Mammary epithelial cell (primary cell): ENCODE measurements at regions of chr19 and their contacts with region 1.

Region 1: GRCh38 chr19:39065928-39066327 is 18.2 kb upstream of the ACP7 start:
- DNase-seq: no peak
- H3K4me3 ChIP-seq: no peak overlapping the region
- H3K27ac ChIP-seq: no peak overlapping the region
- H3K4me1 ChIP-seq: peaks cover 6% of the 10 kb centered on the region
- H3K27me3 ChIP-seq: no peaks in the 10 kb centered on the region
- CTCF ChIP-seq: no peak

Region 2: GRCh38 chr19:39110263-39110967 is 44.5 kb after region 1 on chr19:
- CTCF ChIA-PET with region 1: no interaction called
- dilution Hi-C with region 1: loop called (anchors 5 kb)
- in situ Hi-C with region 1: no loop called
- intact Hi-C with region 1: no loop called
- DNase-seq: no peak
- H3K4me3 ChIP-seq: no peak overlapping the region
- H3K27ac ChIP-seq: no peak overlapping the region
- H3K4me1 ChIP-seq: peaks cover 15% of the 10 kb centered on the region
- H3K27me3 ChIP-seq: no peaks in the 10 kb centered on the region
- CTCF ChIP-seq: peak; percentile 70 to 85

Region 3: GRCh38 chr19:39144245-39145071 is 78.5 kb after region 1 on chr19:
- CTCF ChIA-PET with region 1: no interaction called
- dilution Hi-C with region 1: no loop called
- in situ Hi-C with region 1: no loop called
- intact Hi-C with region 1: no loop called
- DNase-seq: no peak
- H3K4me3 ChIP-seq: no peak overlapping the region
- H3K27ac ChIP-seq: no peak overlapping the region
- H3K4me1 ChIP-seq: peaks cover 16% of the 10 kb centered on the region
- H3K27me3 ChIP-seq: no peaks in the 10 kb centered on the region
- CTCF ChIP-seq: no peak